HEK293 (cell line): ENCODE measurements at regions of chr19 and their contacts with region 1.

Region 1: DNA sequence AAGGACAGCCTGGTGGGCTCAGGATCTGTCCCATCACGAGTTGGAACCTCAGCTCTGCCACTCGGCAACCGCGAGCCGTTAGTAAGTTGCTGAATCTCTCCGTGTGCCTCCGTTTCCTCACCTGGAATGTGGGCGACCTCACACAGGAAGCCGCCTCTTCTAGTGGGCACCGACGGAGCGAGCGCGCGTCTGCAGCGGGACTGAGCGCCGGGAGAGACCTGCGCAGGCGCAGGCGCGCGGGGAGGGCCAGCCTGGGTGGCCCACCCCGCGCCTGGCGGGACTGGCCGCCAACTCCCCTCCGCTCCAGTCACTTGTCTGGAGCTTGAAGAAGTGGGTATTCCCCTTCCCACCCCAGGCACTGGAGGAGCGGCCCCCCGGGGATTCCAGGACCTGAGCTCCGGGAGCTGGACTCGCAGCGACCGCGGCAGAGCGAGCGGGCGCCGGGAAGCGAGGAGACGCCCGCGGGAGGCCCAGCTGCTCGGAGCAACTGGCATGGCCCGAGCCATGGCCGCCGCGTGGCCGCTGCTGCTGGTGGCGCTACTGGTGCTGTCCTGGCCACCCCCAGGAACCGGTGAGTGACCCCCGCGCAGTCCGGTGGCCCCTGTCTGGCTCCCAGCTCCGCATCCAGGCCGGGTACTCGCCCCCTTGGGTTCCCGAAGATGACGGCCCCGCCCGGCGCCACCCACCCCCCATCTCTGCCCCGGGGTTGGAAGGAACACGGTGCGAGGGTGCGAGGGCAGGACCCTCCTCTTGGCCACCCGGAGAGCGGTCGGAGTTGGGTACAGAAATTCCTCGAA is at the start of gene PVR:
- H3K4me3 ChIP-seq: peak within 1 kb of the TSS; percentile 83
- H3K27ac ChIP-seq: peak within 1 kb of the TSS; percentile 90
- H3K4me1 ChIP-seq: no peaks in the 10 kb centered on the region
- CTCF ChIP-seq: peak; percentile 52; the same call in 1 of the 2 replicates

Region 2: DNA sequence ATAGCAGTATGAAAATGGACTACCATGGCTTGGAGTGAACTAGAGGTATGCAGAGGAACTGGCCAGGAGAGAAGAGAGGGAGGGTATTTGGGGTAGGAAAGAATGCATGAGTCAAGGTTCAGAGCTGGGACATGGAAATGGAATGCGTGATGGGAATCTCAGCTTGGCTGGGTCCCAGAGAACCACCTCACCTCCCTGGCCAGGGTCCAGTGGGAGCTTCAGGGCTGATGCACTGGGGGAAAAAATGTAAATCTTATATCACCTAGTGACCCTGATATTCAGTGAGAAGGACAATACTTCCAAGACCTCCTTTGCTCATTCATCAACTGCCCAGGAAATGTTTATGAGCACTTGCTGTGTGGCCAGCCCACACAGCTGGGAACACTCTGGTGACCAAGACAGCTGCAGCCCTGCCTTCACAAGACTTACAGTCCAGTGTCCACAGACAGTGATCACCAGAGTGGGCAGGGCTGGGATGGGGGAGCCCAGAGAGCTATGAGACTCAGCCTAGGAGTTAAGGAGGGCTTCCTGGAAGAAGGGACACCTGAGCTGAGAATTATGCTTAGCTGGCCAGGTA is 17.7 kb before region 1 on chr19:
- CTCF ChIA-PET with region 1: no interaction called
- POLR2A ChIA-PET with region 1: interaction called, 12 read pairs
- H3K4me3 ChIP-seq: no peak overlapping the region
- H3K27ac ChIP-seq: no peak overlapping the region
- H3K4me1 ChIP-seq: no peaks in the 10 kb centered on the region
- CTCF ChIP-seq: no peak

Region 3: GRCh38 chr19:44657211-44657921 is 13.6 kb after region 1 on chr19:
- CTCF ChIA-PET with region 1: interaction called, 10 read pairs
- POLR2A ChIA-PET with region 1: interaction called, 8 read pairs
- H3K4me3 ChIP-seq: no peak overlapping the region
- H3K27ac ChIP-seq: no peak overlapping the region
- H3K4me1 ChIP-seq: no peaks in the 10 kb centered on the region
- CTCF ChIP-seq: peak; percentile 92